Body of pancreas (tissue), 4 donors: ENCODE measurements at regions of chr5 and their contacts with region 1.

Region 1: GRCh38 chr5:139422307-139422893 is 16.9 kb downstream of the DNAJC18 start:
- DNase-seq: peak; percentile 49 to 71 (median 52)
- ATAC-seq: peak; percentile 90
- H3K4me3 ChIP-seq: no peak overlapping the region
- H3K27ac ChIP-seq: no peak overlapping the region
- H3K4me1 ChIP-seq: no peaks in the 10 kb centered on the region
- H3K27me3 ChIP-seq: no peaks in the 10 kb centered on the region
- CTCF ChIP-seq: peak; percentile 35 to 85 (median 83)
- POLR2A ChIP-seq: no peak

Region 2: GRCh38 chr5:139517683-139518564 is 95.5 kb after region 1 on chr5:
- intact Hi-C with region 1: loop called (anchors 10 kb)
- DNase-seq: peak; percentile 91 to 96 (median 94)
- ATAC-seq: peak; percentile 96
- H3K4me3 ChIP-seq: peak overlapping the region in 1 of 2 donors; percentile 1
- H3K27ac ChIP-seq: peak overlapping the region; percentile 74 to 86 (median 80)
- H3K4me1 ChIP-seq: peaks cover 7% of the 10 kb centered on the region
- H3K27me3 ChIP-seq: no peaks in the 10 kb centered on the region
- CTCF ChIP-seq: peak; percentile 96 to 99 (median 99)
- POLR2A ChIP-seq: peak; percentile 81 to 87 (median 83)